ENCODE measurements at regions of chr18 and their contacts with region 1.

Region 1: DNA sequence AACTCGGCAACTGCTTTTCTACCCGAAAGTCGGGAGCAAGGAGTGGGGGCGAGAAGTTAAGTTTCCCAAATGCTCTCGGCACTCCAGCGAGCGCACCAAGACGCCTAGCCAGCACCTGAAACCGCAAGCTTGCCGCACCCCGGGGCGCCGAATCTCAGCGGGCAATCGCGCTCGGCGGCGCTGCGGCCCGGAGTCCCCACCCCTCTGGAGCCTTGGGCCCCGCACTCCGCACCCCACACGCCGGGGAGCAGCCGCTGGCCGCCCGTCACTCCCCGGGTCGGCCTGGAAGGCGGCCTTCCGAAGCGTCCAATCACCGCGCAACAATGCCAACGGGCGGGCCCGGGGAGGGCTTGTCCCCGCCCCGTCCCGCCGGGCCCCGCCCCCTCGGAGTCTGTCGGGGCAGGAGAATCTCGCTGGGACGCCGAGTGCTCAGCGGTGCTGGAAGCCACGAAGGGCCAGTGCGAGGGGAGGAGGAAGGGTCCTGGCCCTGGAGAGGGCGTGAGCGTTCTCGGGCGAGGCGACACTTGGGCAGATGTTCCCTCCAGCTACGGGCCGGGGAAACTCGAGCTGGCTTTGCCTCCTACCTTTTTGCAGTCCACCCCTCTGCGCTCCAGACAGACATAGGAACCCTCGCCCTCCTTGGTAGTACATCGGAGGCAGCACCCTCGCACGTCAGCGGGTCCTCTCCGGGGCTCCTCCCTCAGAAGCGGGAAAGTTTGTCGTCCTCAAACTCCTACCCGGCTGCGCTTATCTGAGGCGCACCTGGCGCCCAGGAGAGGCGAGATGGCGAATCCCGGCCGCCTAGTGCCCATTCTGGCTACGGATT is 1.1 kb upstream of the ZBTB7C start:
- DNase-seq: peak; percentile 92 to 95 (median 94)
- H3K4me3 ChIP-seq: peak overlapping the region; percentile 82
- H3K27ac ChIP-seq: peak overlapping the region in 1 of 2 donors; percentile 71
- H3K4me1 ChIP-seq: no peaks in the 10 kb centered on the region
- H3K27me3 ChIP-seq: no peaks in the 10 kb centered on the region
- CTCF ChIP-seq: peak in 1 of 3 donors; percentile 16
- EP300 ChIP-seq: no peak
- POLR2A ChIP-seq: peak; percentile 4

Region 2: DNA sequence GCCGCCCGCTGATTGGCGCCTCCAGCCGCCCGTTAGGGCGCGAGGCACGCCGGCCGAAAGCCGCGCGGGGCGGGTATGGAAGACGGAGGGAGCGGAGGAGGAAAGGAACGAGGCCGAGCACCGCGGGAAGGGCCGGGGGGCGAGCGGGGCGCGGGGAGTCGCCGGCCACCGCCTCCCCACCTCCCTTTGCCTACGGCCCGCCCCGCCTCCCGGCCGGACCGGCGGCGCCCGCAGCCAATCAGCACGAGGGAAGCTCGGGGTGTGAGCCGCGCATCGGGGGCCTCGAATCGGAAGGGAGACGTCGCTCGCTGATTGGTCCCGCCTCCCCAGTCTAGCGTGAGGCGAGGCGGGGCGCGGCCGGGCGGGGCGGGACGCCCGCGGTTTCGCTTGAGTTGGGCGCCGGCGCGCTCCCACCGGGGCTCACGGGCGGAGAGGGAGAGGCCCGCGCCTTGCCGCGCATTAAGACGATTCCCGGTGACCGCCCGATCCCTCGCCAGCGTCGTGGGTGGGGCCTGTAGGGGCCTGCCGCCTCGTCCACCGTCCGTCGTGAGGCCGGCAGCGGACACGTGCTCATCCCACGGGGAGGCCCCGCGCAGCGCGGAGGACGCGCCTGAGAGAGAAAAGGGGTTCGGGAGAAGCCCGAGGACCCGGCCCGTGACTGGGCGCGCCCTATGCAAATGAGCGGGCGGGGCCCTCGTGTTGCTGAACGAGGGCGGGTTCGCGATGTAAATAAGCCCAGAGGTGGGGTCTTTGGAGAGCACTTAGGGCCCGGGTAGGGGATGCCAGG is 479.2 kb before region 1 on chr18:
- intact Hi-C with region 1: loop called in 1 of 4 experiments (anchors 2 kb)
- DNase-seq: peak; percentile 96 to 97 (median 96)
- H3K4me3 ChIP-seq: peak overlapping the region; percentile 82
- H3K27ac ChIP-seq: peak overlapping the region; percentile 74 to 98
- H3K4me1 ChIP-seq: no peaks in the 10 kb centered on the region
- H3K27me3 ChIP-seq: no peaks in the 10 kb centered on the region
- CTCF ChIP-seq: no peak
- EP300 ChIP-seq: peak; percentile 16
- POLR2A ChIP-seq: peak; percentile 47

Region 3: DNA sequence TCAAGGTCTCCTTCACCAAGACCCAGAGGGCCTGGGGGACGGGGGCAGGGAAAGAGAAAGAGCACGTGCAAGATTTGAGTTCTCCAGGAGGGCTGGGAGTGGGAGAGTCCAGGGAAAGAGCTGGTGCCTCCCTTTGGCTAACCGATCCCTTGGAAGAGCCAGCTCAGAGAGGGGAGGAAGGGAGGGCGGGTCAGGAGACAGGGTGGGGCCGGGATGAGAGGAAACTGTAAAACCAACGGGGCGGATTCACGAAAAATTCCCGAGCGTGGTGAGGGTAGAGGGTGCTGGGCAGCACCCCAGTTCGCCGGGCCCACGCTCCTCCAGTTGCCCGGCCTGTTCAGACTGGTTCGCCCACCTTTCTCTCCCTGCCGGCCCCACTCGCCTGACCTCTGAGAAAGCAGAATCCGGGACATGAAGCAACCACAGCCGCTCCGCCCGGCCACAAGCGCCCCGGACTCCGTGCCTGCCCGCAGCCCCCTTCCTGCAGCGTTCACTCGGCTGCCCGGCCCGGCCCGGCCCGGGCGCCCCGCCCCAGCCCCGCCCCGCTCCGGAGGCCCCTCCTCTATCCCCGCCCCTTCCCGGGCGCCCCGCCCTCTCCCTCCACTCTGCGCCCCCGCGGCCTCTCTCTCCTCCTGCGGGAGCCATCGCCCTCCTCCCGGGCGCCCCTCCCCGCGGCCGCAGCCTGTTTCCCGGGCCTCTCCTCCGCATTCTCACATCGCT is 249.0 kb before region 1 on chr18:
- intact Hi-C with region 1: loop called in 1 of 4 experiments (anchors 10 kb)
- DNase-seq: peak; percentile 91 to 95 (median 95)
- H3K4me3 ChIP-seq: peak overlapping the region; percentile 47
- H3K27ac ChIP-seq: peak overlapping the region; percentile 73 to 92
- H3K4me1 ChIP-seq: peaks cover 30% of the 10 kb centered on the region
- H3K27me3 ChIP-seq: no peaks in the 10 kb centered on the region
- CTCF ChIP-seq: no peak
- EP300 ChIP-seq: no peak
- POLR2A ChIP-seq: peak; percentile 53

Region 4: GRCh38 chr18:48345596-48345995 is 64.7 kb before region 1 on chr18:
- intact Hi-C with region 1: loop called in 2 of 4 experiments (anchors 5 kb)
- DNase-seq: no peak
- H3K4me3 ChIP-seq: no peak overlapping the region
- H3K27ac ChIP-seq: no peak overlapping the region
- H3K4me1 ChIP-seq: peaks cover 5% of the 10 kb centered on the region
- H3K27me3 ChIP-seq: no peaks in the 10 kb centered on the region
- CTCF ChIP-seq: no peak
- EP300 ChIP-seq: no peak
- POLR2A ChIP-seq: no peak